Endothelial cell of umbilical vein (primary cell): ENCODE measurements at regions of chr10 and their contacts with region 1.

Region 1: DNA sequence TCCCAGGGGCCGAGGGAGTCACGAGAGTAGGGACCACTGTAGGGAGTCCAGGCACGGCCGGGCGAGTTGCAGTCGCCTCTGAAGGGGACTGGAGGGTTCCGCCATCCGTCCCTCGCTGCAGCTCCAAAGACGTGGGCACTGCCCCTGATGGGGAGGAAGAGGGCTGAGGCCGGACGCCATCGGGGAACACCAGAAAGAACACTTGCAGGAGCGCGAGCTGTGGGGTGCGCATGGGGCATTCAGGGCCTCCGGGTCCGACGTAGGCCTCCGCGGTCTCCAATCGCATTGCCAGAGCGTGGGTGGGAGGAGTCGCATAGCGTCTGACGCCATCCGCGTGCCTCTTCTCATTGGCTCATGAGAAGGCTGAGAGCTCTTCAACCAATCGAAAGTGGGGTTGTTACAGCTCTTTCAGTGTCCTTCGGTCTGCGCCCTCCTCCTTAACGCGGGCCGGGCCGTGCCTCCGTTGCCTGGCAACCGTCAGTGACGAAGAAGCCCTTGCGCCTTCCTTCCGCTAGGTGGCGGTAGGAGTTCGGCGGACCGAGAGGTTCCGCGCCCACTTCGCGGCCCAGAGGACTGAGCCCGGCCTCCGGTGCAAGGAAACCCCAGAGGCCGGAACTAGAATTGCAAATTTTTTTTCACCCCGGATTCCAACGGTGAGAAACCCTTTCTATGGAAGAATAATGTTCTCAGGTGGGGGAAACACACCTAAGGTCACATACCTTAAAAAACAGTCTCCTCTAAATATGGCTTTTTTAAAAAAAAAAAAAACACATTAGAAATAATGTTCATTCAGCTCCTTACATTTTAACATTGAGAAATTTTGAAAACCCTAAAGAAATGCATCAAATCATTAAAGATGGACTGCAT is at the start of gene TCTN3:
- DNase-seq: peak; percentile 100
- H3K4me3 ChIP-seq: peak within 1 kb of the TSS; percentile 48 to 83 (median 68)
- H3K27ac ChIP-seq: peak within 1 kb of the TSS; percentile 26
- H3K4me1 ChIP-seq: peaks cover 13% of the 10 kb centered on the region
- H3K27me3 ChIP-seq: no peaks in the 10 kb centered on the region
- CTCF ChIP-seq: peak; percentile 99 to 100
- POLR2A ChIP-seq: peak; percentile 67
- total RNA-seq, gene TCTN3: 40.4 and 42.9 TPM in 2 replicates

Region 2: DNA sequence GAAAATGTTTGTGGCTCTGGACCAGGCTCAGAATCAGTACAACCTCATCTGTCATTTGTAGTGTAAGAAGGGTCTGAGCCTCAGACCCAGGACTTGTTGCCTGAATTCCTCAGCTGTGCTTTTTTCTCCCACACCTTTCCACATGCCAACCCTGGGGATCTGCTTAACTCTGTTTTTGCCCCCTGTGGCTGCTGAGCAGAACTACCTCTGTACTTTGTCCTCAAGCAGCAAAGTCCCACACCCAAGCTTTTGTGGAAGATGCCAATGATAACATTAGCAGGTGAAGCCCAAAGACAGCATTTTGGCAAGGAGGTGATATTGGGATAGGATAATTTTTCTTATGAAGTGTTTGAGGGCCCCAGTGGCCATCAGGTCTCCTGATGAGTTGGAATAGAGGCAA is 1016.2 kb before region 1 on chr10:
- CTCF ChIA-PET with region 1: no interaction called
- POLR2A ChIA-PET with region 1: no interaction called
- dilution Hi-C with region 1: no loop called
- intact Hi-C with region 1: no loop called
- DNase-seq: no peak
- H3K4me3 ChIP-seq: no peak overlapping the region
- H3K27ac ChIP-seq: no peak overlapping the region
- H3K4me1 ChIP-seq: no peaks in the 10 kb centered on the region
- H3K27me3 ChIP-seq: no peaks in the 10 kb centered on the region
- CTCF ChIP-seq: no peak
- POLR2A ChIP-seq: no peak

Region 3: GRCh38 chr10:95675403-95676112 is 18.3 kb before region 1 on chr10:
- CTCF ChIA-PET with region 1: interaction called, 37 read pairs
- POLR2A ChIA-PET with region 1: no interaction called
- dilution Hi-C with region 1: no loop called
- intact Hi-C with region 1: no loop called
- DNase-seq: no peak
- H3K4me3 ChIP-seq: no peak overlapping the region
- H3K27ac ChIP-seq: no peak overlapping the region
- H3K4me1 ChIP-seq: no peaks in the 10 kb centered on the region
- H3K27me3 ChIP-seq: no peaks in the 10 kb centered on the region
- CTCF ChIP-seq: no peak
- POLR2A ChIP-seq: no peak

Region 4: DNA sequence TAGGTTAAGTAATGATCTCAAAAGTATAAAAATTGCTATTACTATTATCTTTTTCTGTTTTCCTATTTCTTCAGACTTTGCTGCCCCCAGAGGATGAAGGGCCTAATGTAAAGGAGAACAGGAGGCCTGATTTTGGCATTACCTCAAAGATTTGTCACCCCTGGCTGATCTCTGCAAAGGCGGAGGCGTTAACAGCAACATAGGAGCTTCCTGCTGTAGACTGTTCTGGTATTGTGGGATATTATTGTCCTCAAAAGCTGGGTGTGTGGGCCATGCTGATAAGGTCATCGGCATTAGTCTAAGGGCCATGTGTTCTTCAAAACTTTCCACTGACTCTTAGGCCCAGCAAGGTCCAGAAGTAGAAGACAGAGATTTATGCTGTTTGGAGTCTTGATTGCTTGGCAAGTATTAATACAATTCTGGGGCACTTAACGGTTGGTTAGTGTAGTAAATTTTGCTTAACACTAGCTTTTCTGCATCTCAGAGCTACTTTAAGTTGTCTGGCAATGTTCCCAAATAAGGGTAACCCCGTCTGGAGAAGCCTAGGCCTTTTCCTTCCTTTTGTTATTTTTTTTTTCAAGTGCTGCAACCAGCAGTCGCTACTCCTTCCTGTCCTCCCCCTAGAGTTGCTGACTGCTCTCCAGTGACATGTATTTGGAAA is 48.0 kb after region 1 on chr10:
- CTCF ChIA-PET with region 1: interaction called, 79 read pairs
- POLR2A ChIA-PET with region 1: interaction called, 8 read pairs
- dilution Hi-C with region 1: no loop called
- intact Hi-C with region 1: loop called (anchors 1 kb)
- DNase-seq: peak; percentile 98
- H3K4me3 ChIP-seq: peak overlapping the region in 1 of 3 experiments; percentile 1
- H3K27ac ChIP-seq: peak overlapping the region; percentile 75
- H3K4me1 ChIP-seq: peaks cover 26% of the 10 kb centered on the region
- H3K27me3 ChIP-seq: no peaks in the 10 kb centered on the region
- CTCF ChIP-seq: peak; percentile 41 to 58
- POLR2A ChIP-seq: no peak

Region 5: GRCh38 chr10:95792874-95793285 is 99.0 kb after region 1 on chr10:
- CTCF ChIA-PET with region 1: interaction called, 13 read pairs
- POLR2A ChIA-PET with region 1: no interaction called
- dilution Hi-C with region 1: no loop called
- intact Hi-C with region 1: no loop called
- DNase-seq: peak; percentile 89
- H3K4me3 ChIP-seq: no peak overlapping the region
- H3K27ac ChIP-seq: peak overlapping the region; percentile 29
- H3K4me1 ChIP-seq: peaks cover 40% of the 10 kb centered on the region
- H3K27me3 ChIP-seq: no peaks in the 10 kb centered on the region
- CTCF ChIP-seq: no peak
- POLR2A ChIP-seq: no peak

Region 6: GRCh38 chr10:95841661-95842498 is 148.0 kb after region 1 on chr10:
- CTCF ChIA-PET with region 1: interaction called, 758 read pairs
- POLR2A ChIA-PET with region 1: interaction called, 7 read pairs
- dilution Hi-C with region 1: no loop called
- intact Hi-C with region 1: loop called (anchors 1 kb)
- DNase-seq: peak; percentile 84
- H3K4me3 ChIP-seq: no peak overlapping the region
- H3K27ac ChIP-seq: peak overlapping the region; percentile 22
- H3K4me1 ChIP-seq: peaks cover 7% of the 10 kb centered on the region
- H3K27me3 ChIP-seq: no peaks in the 10 kb centered on the region
- CTCF ChIP-seq: peak; percentile 39 to 44
- POLR2A ChIP-seq: no peak

Region 7: GRCh38 chr10:96339957-96340904 is 646.3 kb after region 1 on chr10:
- CTCF ChIA-PET with region 1: interaction called, 10 read pairs
- POLR2A ChIA-PET with region 1: no interaction called
- dilution Hi-C with region 1: no loop called
- intact Hi-C with region 1: no loop called
- DNase-seq: peak; percentile 53
- H3K4me3 ChIP-seq: no peak overlapping the region
- H3K27ac ChIP-seq: no peak overlapping the region
- H3K4me1 ChIP-seq: no peaks in the 10 kb centered on the region
- H3K27me3 ChIP-seq: peaks cover 3 to 4% of the 10 kb centered on the region in 2 experiments
- CTCF ChIP-seq: peak; percentile 77 to 79
- POLR2A ChIP-seq: no peak